ENCODE measurements at regions of chr6 and their contacts with region 1.

Region 1: GRCh38 chr6:110039364-110039980 is 61.4 kb downstream of the GPR6 start:
- DNase-seq: peak; percentile 92
- H3K4me3 ChIP-seq: peak overlapping the region; percentile 58
- H3K27ac ChIP-seq: peak overlapping the region; percentile 42
- H3K4me1 ChIP-seq: peaks cover 15% of the 10 kb centered on the region
- CTCF ChIP-seq: peak; percentile 96

Region 2: DNA sequence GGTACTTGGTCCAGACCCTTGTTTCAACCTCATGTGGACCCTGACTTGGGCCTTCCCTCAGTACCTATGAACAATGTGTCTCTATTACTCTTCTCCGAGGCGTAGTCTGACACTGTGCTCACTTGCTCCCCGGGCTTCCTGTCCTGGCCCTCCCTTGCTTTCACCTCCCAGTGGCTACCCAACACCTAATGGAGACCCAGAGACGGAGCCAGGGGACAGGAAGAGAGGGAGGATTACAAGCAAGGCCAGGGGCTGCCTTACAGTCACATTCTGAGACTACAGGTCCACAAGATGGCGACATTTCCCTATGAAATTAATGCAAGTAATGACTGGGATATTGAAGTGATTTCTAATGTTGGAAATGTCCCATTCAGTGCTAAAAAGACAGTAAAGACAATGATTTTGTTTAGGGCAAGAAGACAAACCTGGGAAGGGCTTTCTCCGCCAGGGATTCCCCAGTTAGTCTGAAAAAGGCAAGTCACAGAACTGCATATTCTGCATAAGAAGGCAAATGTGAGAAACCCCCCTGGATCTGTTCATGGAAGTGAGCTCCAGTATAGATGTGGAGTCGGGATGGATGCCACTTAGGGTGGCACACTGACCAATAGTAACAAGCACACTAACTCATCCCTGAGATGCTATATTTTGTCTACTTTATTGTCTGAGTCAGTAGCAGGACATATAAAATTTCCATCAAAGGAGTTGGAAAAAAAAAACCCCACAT is 512.4 kb before region 1 on chr6:
- CTCF ChIA-PET with region 1: interaction called, 3 read pairs
- POLR2A ChIA-PET with region 1: no interaction called
- intact Hi-C with region 1: loop called (anchors 1 kb)
- DNase-seq: peak; percentile 76
- H3K4me3 ChIP-seq: no peak overlapping the region
- H3K27ac ChIP-seq: no peak overlapping the region
- H3K4me1 ChIP-seq: no peaks in the 10 kb centered on the region
- CTCF ChIP-seq: peak; percentile 87

Region 3: GRCh38 chr6:109877028-109878006 is 162.2 kb before region 1 on chr6:
- CTCF ChIA-PET with region 1: no interaction called
- POLR2A ChIA-PET with region 1: no interaction called
- intact Hi-C with region 1: loop called (anchors 10 kb)
- DNase-seq: no peak
- H3K4me3 ChIP-seq: no peak overlapping the region
- H3K27ac ChIP-seq: no peak overlapping the region
- H3K4me1 ChIP-seq: no peaks in the 10 kb centered on the region
- CTCF ChIP-seq: no peak

Region 4: GRCh38 chr6:109927052-109927451 is 112.4 kb before region 1 on chr6:
- CTCF ChIA-PET with region 1: no interaction called
- POLR2A ChIA-PET with region 1: no interaction called
- intact Hi-C with region 1: no loop called
- DNase-seq: no peak
- H3K4me3 ChIP-seq: no peak overlapping the region
- H3K27ac ChIP-seq: no peak overlapping the region
- H3K4me1 ChIP-seq: no peaks in the 10 kb centered on the region
- CTCF ChIP-seq: no peak

Region 5: GRCh38 chr6:110389689-110390382 is 350.4 kb after region 1 on chr6:
- CTCF ChIA-PET with region 1: interaction called, 27 read pairs
- POLR2A ChIA-PET with region 1: interaction called, 3 read pairs
- intact Hi-C with region 1: loop called (anchors 1 kb)
- DNase-seq: peak; percentile 9
- H3K4me3 ChIP-seq: no peak overlapping the region
- H3K27ac ChIP-seq: no peak overlapping the region
- H3K4me1 ChIP-seq: no peaks in the 10 kb centered on the region
- CTCF ChIP-seq: no peak

Measured in OCI-LY7 (cell line).